Activated T-helper 1 cell treated with anti-CD3 and anti-CD28 coated beads, Interleukin-12 subunit alpha, Interleukin-12 subunit beta, Interleukin-2, Interleukin-4 antibody, amounts not matched to agents 30 ng/mL and 10 ng/mL and 1 ng/mL, durations not matched to agents 14 hours and 24 hours and 36 hours (primary cell): ENCODE measurements at regions of chr12 and their contacts with region 1.

Region 1: DNA sequence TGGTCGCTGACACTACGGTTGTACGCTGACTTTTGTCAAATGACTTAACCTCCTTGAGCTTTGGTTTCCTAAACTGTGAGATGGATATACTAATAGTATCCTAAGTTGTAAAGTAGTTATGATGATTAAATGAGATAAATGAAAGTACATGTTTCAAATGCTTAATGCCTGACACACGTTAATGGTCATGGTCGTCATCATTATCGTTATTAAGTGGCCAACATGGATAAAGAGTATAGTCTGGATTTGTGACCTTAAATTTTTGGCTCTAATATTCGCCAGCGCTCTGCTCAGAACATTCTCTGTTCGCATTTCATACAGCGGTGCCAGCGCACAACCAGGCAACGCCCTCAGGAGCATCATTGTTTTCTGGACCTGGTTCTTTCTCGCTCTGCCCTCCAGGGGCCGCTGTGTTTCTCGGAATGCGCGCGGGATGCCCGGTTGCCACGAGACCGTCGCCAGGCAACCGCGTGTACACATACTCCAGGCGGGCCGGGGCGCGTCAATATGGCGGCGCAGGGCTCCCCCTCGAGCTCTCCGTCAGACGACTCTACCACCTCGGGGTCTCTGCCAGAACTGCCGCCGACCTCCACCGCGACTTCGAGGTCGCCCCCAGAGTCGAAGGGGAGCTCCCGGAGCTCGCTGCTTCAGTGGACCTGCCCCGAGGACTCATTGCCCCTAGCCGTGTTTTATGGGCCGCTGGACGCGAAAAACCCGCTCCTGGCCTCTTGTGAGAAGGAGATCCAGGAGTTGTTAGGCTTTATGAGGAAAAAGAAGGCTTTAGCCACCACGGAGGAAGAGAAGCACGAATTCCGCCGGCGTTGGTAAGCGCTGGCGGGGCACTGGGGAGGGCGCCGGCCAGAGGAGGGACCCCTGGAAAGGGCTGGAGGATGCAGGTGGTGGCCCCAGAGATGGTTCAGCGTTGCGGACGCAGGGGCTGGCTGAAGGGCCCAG is at the start of gene CFAP54:
- DNase-seq: peak; percentile 92
- H3K4me3 Mint-ChIP-seq: peak within 1 kb of the TSS; percentile 86
- H3K27ac Mint-ChIP-seq: peak within 1 kb of the TSS; percentile 85
- H3K4me1 Mint-ChIP-seq: peaks cover 43% of the 10 kb centered on the region
- H3K27me3 Mint-ChIP-seq: peaks cover 25% of the 10 kb centered on the region
- total RNA-seq, gene CFAP54: 0.17 and 0.34 TPM in 2 replicates

Region 2: GRCh38 chr12:96047229-96048211 is 441.9 kb before region 1 on chr12:
- intact Hi-C with region 1: loop called (anchors 5 kb)
- DNase-seq: peak; percentile 4
- H3K4me3 Mint-ChIP-seq: peak overlapping the region; percentile 67
- H3K27ac Mint-ChIP-seq: peak overlapping the region; percentile 89
- H3K4me1 Mint-ChIP-seq: peaks cover 47% of the 10 kb centered on the region
- H3K27me3 Mint-ChIP-seq: no peaks in the 10 kb centered on the region

Region 3: GRCh38 chr12:96177013-96177412 is 312.4 kb before region 1 on chr12:
- intact Hi-C with region 1: loop called (anchors 2 kb)
- DNase-seq: peak; percentile 63
- H3K4me3 Mint-ChIP-seq: peak overlapping the region; percentile 5
- H3K27ac Mint-ChIP-seq: peak overlapping the region; percentile 87
- H3K4me1 Mint-ChIP-seq: peaks cover 27% of the 10 kb centered on the region
- H3K27me3 Mint-ChIP-seq: no peaks in the 10 kb centered on the region

Region 4: GRCh38 chr12:96335270-96335669 is 154.1 kb before region 1 on chr12:
- intact Hi-C with region 1: no loop called
- DNase-seq: no peak
- H3K4me3 Mint-ChIP-seq: no peak overlapping the region
- H3K27ac Mint-ChIP-seq: no peak overlapping the region
- H3K4me1 Mint-ChIP-seq: peaks cover 42% of the 10 kb centered on the region
- H3K27me3 Mint-ChIP-seq: no peaks in the 10 kb centered on the region

Region 5: DNA sequence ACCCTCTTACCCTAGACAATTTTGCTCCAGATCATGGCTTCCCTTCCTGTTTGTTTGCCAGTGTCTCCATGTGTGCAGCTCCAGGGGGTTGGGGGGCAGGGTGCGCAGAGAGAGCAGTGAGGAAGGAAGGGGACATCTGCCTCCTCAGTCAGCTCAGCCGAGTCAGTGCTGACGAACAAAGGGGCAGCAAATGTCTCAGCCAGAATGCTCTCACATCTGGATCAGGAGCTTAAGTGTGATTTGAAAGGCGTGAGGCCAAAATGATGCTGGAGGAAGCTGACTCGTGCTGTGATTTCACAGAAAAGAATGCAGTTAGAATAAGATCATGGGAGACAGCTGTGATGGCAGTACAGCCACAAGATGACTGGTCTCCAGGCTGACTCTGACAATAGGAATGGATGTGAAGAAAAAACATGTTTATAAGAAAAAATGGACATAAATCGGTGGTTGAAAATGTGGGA is 62.1 kb before region 1 on chr12:
- intact Hi-C with region 1: loop called (anchors 1 kb)
- DNase-seq: no peak
- H3K4me3 Mint-ChIP-seq: peak overlapping the region; percentile 1
- H3K27ac Mint-ChIP-seq: peak overlapping the region; percentile 53
- H3K4me1 Mint-ChIP-seq: peaks cover 52% of the 10 kb centered on the region
- H3K27me3 Mint-ChIP-seq: peaks cover 5% of the 10 kb centered on the region

Region 6: DNA sequence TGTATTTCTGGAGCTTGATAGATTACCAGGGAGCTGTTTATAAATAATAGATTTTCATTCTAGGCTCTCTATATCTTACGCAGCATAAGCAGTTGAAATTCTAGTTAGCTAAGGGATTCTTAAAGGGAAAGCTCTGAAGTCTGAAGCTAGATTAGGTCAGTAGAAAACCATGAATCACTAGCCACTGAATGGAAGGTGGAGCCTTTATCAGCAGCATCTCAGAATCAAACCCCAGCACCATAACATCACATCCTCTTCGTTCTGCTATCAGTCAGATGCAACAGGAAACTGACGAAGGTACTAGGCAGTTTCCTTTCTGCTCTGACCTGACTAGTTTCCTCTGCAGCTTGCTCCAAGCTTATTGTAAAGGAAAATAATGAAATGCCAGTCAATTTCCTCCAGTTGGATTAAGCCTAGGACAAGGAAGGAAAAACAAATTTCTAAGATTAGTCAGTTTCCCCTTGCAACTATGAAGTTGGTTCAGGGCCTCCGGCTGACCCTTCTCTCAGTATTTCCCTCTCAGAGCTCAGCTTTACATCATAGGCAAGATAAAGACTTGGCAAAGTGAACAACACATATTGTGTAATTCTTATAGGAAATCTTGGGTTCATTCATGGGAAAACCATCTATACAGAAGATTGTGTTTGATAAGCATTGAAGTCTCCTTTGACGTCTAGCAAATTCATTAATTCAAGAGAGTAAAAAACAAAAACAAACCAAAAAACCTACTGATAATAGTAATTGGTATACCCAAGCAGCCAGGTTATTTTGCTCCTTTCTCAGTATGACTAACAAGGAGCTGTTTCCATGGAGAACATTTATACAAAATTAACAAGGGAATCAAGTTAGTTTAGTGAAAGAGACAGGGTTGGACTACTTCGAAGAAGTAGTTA is 43.4 kb before region 1 on chr12:
- intact Hi-C with region 1: loop called (anchors 1 kb)
- DNase-seq: peak; percentile 70
- H3K4me3 Mint-ChIP-seq: peak overlapping the region; percentile 48
- H3K27ac Mint-ChIP-seq: peak overlapping the region; percentile 96
- H3K4me1 Mint-ChIP-seq: peaks cover 51% of the 10 kb centered on the region
- H3K27me3 Mint-ChIP-seq: no peaks in the 10 kb centered on the region

Region 7: DNA sequence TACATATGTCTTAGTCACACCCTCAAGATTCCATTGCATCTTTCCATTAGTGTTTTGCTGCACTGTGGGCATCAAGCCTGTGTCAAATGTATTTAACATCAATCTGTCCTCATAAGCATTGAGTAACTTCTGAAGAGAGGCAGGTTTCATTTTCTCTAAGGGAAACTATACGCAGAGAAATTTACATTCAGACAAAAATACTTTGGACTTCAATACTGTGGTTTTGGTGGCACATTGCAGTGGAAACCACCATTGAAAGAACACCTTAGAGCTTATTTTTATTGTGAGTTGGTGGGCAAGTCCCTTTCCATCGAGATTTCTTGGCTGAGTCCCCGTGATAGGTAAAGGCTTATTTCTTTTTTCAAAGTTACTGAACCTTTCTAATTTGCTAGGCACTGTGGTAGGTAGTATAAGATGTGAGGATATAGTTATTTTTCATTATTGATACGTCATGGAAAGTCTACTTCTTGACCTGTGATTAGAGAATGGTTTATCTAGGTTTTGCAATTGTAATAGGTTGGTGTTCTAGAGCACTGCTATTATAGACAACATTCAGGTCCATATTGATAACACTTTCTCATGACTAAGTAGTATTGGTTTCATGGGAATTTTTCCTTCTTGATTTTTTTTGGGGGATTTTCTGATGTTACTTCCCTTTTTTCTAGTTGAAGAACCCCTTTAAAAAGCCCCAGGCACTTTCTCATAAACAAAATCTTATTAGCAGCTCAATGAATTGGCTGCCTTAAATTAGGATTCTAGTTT is 81.9 kb after region 1 on chr12:
- intact Hi-C with region 1: loop called (anchors 1 kb)
- DNase-seq: no peak
- H3K4me3 Mint-ChIP-seq: peak overlapping the region; percentile 15
- H3K27ac Mint-ChIP-seq: peak overlapping the region; percentile 40
- H3K4me1 Mint-ChIP-seq: peaks cover 14% of the 10 kb centered on the region
- H3K27me3 Mint-ChIP-seq: no peaks in the 10 kb centered on the region

Region 8: GRCh38 chr12:96743606-96744005 is 254.2 kb after region 1 on chr12:
- intact Hi-C with region 1: no loop called
- DNase-seq: no peak
- H3K4me3 Mint-ChIP-seq: no peak overlapping the region
- H3K27ac Mint-ChIP-seq: no peak overlapping the region
- H3K4me1 Mint-ChIP-seq: no peaks in the 10 kb centered on the region
- H3K27me3 Mint-ChIP-seq: peaks cover 7% of the 10 kb centered on the region